ENCODE measurements at regions of chr6 and their contacts with region 1.

Region 1: DNA sequence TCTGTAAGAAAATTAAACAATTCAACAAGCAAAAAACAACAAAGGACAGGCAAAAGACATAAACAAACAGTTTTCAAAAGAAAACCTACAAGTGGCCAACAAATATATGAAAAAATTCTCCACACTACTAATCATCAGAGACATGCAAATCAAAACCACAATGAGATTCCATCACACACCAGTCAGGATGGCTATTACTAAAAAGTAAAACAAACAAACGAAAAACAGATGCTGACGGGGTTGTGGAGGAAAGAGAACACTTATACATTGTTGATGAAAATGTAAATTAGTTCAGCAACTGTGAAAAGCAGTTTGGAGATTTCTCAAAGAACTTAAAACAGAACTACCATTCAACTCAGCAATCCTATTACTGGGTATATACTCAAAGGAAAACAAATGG is 537.6 kb downstream of the HDGFL1 start:
- DNase-seq: no peak
- H3K4me3 Mint-ChIP-seq: no peak overlapping the region
- H3K27ac Mint-ChIP-seq: no peak overlapping the region
- H3K4me1 Mint-ChIP-seq: no peaks in the 10 kb centered on the region
- H3K27me3 Mint-ChIP-seq: no peaks in the 10 kb centered on the region
- CTCF ChIP-seq: no peak

Region 2: GRCh38 chr6:23323897-23324296 is 216.9 kb after region 1 on chr6:
- CTCF ChIA-PET with region 1: no interaction called
- intact Hi-C with region 1: loop called (anchors 5 kb)
- DNase-seq: no peak
- H3K4me3 Mint-ChIP-seq: no peak overlapping the region
- H3K27ac Mint-ChIP-seq: no peak overlapping the region
- H3K4me1 Mint-ChIP-seq: no peaks in the 10 kb centered on the region
- H3K27me3 Mint-ChIP-seq: no peaks in the 10 kb centered on the region
- CTCF ChIP-seq: no peak